Esophagus squamous epithelium (tissue), 5 donors: ENCODE measurements at regions of chr12 and their contacts with region 1.

Region 1: DNA sequence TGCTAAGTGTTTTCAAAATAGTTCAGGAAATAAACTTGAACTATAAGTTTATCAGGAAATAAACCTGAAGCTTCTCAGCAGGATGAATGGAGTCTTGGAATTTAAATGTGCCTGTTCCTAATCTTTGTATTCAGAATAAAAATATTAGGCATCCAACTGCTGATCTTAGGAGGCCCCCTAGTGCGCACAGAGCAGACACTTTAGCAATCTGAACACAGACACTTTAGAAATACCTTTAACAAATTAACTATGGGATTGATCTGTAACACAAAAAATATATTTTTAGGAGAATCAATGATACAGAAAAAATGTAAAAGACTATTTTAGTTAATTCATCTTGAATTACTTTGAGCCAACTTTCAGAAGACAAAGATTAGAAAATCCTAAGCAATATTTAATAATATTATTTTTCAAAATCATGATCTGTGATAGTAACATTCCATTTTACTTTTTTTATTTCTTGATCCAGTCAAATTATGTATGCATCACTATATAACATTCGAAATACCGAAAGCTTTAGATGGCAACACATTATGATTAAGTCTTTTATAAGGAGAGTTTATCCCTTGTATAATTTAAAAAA is 80.9 kb downstream of the SLC41A2 start:
- DNase-seq: no peak
- H3K4me3 ChIP-seq: no peak overlapping the region
- H3K27ac ChIP-seq: no peak overlapping the region
- H3K4me1 ChIP-seq: no peaks in the 10 kb centered on the region
- H3K27me3 ChIP-seq: no peaks in the 10 kb centered on the region
- CTCF ChIP-seq: peak in 5 of 6 experiments; percentile 34 to 78 (median 69)
- POLR2A ChIP-seq: no peak

Region 2: GRCh38 chr12:104381731-104382480 is 495.3 kb before region 1 on chr12:
- intact Hi-C with region 1: loop called (anchors 5 kb)
- DNase-seq: peak; percentile 9
- H3K4me3 ChIP-seq: no peak overlapping the region
- H3K27ac ChIP-seq: no peak overlapping the region
- H3K4me1 ChIP-seq: peaks cover 0 to 9% (median 5%) of the 10 kb centered on the region in 3 donors
- H3K27me3 ChIP-seq: peaks cover 0 to 10% (median 0%) of the 10 kb centered on the region in 4 donors
- CTCF ChIP-seq: peak; percentile 85 to 96 (median 94)
- POLR2A ChIP-seq: no peak

Region 3: DNA sequence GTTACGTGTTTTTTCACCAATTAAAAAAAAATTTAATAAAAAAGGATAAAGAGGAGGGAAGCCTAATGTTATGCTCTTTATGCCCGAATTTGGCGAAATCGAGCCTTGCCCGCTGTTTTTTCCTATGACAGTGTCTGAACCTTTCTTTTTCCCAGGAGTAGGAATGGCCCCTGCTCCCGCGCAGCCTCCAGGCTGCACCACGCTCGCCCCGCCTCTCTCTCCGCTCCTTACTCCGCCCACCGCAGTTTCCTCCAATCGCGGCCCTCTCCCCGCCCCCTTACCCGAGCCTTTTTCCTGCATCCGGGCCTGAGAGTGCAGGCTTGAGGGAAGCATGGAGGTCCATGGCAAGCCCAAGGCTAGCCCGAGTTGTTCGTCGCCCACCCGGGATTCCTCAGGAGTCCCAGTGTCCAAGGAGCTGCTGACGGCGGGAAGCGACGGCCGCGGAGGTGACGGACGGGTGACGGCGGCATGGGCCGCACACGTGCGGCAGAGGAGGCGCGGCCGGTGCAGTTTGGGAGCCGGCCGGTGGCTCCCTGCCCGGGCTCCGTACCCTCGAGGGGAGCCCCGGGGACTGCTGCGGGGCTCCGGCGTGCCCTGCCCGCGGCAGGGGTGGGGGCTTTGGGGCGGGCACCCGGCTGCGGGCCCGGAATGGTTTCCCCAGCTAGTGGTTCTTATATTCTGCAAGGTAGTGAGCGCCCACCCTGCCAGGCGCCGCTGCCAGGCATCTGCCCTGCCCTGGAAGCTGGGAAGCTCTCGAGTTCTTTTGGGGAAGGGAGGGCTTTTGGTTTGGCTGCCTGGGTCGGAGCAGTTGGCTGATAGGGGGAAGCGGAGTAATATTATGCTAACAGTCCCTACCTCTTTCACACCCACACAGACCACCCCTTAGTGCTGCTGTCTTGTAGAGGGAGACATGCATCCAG is 109.1 kb after region 1 on chr12 and contains the start of gene NOPCHAP1:
- intact Hi-C with region 1: no loop called
- DNase-seq: peak; percentile 31
- H3K4me3 ChIP-seq: peak within 1 kb of the TSS; percentile 64 to 96 (median 79)
- H3K27ac ChIP-seq: peak within 1 kb of the TSS; percentile 66 to 76 (median 76)
- H3K4me1 ChIP-seq: peaks cover 10 to 28% (median 15%) of the 10 kb centered on the region in 3 donors
- H3K27me3 ChIP-seq: no peaks in the 10 kb centered on the region
- CTCF ChIP-seq: peak in 1 of 6 experiments; percentile 29
- POLR2A ChIP-seq: peak in 2 of 4 donors; percentile 42 to 59
- total RNA-seq, gene NOPCHAP1: 0.76 to 9.3 (median 5.2) TPM